ENCODE measurements at regions of chr13 and their contacts with region 1.

Region 1: GRCh38 chr13:49792550-49793324 is at the start of gene KPNA3:
- DNase-seq: peak; percentile 92 to 98 (median 96)
- ATAC-seq: peak; percentile 91
- H3K4me3 ChIP-seq: peak within 1 kb of the TSS; percentile 83 to 99
- H3K4me3 Mint-ChIP-seq: peak within 1 kb of the TSS; percentile 95
- H3K27ac ChIP-seq: peak within 1 kb of the TSS; percentile 79 to 89
- H3K27ac Mint-ChIP-seq: peak within 1 kb of the TSS; percentile 96
- H3K4me1 ChIP-seq: peaks cover 21% of the 10 kb centered on the region
- H3K4me1 Mint-ChIP-seq: peaks cover 34% of the 10 kb centered on the region
- H3K27me3 ChIP-seq: peaks cover 0 to 7% of the 10 kb centered on the region in 2 experiments
- H3K27me3 Mint-ChIP-seq: peaks cover 9% of the 10 kb centered on the region
- CTCF ChIP-seq: no peak
- total RNA-seq, gene KPNA3: 22.3 to 23.5 TPM

Region 2: DNA sequence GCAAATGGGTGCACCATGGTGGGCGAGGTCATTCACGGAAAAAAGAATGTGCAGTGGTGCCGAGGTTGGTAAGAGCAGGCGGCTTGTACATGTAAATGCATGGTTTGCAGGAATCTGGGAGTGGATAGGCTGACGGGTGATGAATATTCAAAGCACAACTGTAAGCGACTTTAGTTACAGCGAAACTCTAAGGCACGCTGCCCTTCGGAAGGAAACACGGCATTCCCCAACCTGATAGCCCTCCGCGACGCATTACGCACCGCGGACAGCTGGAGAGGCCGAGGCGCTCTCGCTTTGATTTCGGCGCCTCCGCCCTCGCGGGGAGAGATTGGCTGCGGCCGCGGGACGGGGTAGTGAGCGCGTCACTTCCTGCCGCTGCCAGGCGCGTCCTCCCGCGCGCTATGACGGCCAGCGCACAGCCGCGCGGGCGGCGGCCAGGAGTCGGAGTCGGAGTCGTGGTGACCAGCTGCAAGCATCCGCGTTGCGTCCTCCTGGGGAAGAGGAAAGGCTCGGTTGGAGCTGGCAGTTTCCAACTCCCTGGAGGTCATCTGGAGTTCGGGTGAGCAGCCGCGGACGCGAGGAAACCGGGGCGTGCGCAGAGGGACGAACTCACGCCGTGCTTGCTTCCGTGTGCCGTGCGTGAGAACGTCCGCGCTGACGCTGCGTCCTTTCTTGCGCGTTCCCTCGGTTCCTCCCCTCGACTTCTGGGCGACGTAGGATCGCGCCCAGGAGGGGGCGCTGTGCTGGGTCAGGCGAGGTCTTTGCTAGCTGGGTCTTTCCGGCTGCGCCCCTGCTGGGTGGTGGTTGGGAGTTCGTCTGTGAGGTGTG is 1755.2 kb before region 1 on chr13 and contains the start of gene NUDT15:
- CTCF ChIA-PET with region 1: no interaction called
- POLR2A ChIA-PET with region 1: interaction called, 3 read pairs
- intact Hi-C with region 1: loop called (anchors 5 kb)
- DNase-seq: peak; percentile 88 to 99 (median 97)
- ATAC-seq: peak; percentile 90
- H3K4me3 ChIP-seq: peak within 1 kb of the TSS; percentile 81 to 96
- H3K4me3 Mint-ChIP-seq: peak within 1 kb of the TSS; percentile 97
- H3K27ac ChIP-seq: peak within 1 kb of the TSS; percentile 99
- H3K27ac Mint-ChIP-seq: peak within 1 kb of the TSS; percentile 98
- H3K4me1 ChIP-seq: peaks cover 20% of the 10 kb centered on the region
- H3K4me1 Mint-ChIP-seq: peaks cover 32% of the 10 kb centered on the region
- H3K27me3 ChIP-seq: no peaks in the 10 kb centered on the region
- H3K27me3 Mint-ChIP-seq: no peaks in the 10 kb centered on the region
- CTCF ChIP-seq: peak; percentile 99
- total RNA-seq, gene NUDT15: 23.8 to 24.9 TPM

Region 3: DNA sequence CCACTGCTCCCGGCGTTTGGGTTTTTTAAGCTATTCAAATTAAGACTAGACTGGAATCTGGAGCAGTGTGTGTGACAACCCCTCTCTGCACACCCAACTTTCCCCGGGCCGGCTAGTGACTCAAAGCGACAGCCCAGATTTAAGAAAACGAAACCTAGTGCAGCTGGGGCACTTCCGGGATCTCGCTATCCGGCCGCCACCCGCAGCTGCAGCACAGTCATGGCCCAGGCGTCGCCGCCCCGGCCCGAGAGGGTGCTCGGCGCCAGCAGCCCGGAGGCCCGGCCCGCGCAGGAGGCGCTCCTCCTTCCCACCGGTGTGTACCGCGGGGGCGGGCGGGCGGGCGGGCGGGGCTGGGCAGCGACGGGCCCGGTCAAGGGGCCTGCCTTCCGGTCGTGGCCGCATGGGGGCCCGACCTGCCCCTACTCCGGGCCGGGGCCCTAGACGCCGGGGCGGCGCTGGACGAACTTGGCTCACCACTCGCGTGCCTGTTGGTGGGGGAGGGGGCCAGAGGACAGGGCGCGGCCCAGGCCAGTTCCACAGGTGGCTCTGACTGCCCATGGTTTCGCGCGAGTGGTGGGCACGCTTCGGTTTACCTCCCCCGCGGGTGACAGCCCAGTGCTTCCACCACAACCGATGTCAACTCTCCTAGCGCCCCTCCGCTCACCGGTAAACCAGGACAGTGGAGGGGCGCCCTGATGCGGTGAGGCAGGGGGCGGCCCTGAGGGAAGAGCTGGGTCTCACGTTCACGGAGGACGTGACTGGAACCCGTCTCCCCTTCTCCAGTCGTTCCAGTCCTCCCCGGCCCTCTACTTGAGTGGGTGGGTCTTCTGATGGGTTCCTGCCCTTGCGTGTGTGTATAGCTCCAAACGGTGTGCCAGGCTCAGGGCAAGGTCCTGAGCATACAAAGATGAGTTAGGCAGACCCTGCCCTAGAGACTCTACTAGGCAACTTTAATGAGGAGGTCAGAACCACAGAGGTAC is 296.7 kb before region 1 on chr13 and contains the start of gene PHF11:
- CTCF ChIA-PET with region 1: no interaction called
- POLR2A ChIA-PET with region 1: interaction called, 13 read pairs
- intact Hi-C with region 1: loop called (anchors 2 to 5 kb)
- DNase-seq: peak; percentile 67 to 94 (median 87)
- ATAC-seq: peak; percentile 80
- H3K4me3 ChIP-seq: peak within 1 kb of the TSS; percentile 68 to 88
- H3K4me3 Mint-ChIP-seq: peak within 1 kb of the TSS; percentile 96
- H3K27ac ChIP-seq: peak within 1 kb of the TSS; percentile 90 to 96
- H3K27ac Mint-ChIP-seq: peak within 1 kb of the TSS; percentile 99
- H3K4me1 ChIP-seq: peaks cover 20% of the 10 kb centered on the region
- H3K4me1 Mint-ChIP-seq: peaks cover 47% of the 10 kb centered on the region
- H3K27me3 ChIP-seq: no peaks in the 10 kb centered on the region
- H3K27me3 Mint-ChIP-seq: no peaks in the 10 kb centered on the region
- CTCF ChIP-seq: no peak
- total RNA-seq, gene PHF11: 93.9 to 98.3 TPM

Region 4: GRCh38 chr13:49690992-49691886 is 101.5 kb before region 1 on chr13 and contains the start of gene EBPL:
- CTCF ChIA-PET with region 1: no interaction called
- POLR2A ChIA-PET with region 1: interaction called, 10 read pairs
- intact Hi-C with region 1: loop called (anchors 1 to 5 kb)
- DNase-seq: peak; percentile 65 to 91 (median 88)
- ATAC-seq: peak; percentile 96
- H3K4me3 ChIP-seq: peak within 1 kb of the TSS; percentile 89
- H3K4me3 Mint-ChIP-seq: peak within 1 kb of the TSS; percentile 91
- H3K27ac ChIP-seq: peak within 1 kb of the TSS; percentile 41 to 47
- H3K27ac Mint-ChIP-seq: peak within 1 kb of the TSS; percentile 62
- H3K4me1 ChIP-seq: peaks cover 15% of the 10 kb centered on the region
- H3K4me1 Mint-ChIP-seq: peaks cover 23% of the 10 kb centered on the region
- H3K27me3 ChIP-seq: no peaks in the 10 kb centered on the region
- H3K27me3 Mint-ChIP-seq: no peaks in the 10 kb centered on the region
- CTCF ChIP-seq: peak; percentile 15
- total RNA-seq, gene EBPL: 9.5 to 10.7 TPM

Region 5: DNA sequence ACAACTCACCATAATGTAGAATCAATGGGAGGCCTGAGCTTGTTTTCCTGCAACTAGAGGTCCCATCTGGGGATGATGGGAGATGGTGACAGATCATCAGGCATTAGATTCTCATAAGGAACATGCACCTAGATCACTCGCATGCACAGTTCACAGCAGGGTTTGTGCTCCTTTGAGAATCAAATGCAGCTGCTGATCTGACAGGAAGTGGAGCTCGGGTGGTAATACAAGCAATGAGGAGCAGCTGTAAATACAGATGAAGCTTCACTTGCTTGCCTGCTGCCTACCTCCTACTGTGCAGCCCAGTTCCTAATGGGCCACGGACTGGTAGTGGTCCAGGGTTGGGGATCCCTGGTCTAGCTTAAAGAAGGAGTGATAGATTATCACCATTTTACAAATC is 33.2 kb before region 1 on chr13:
- CTCF ChIA-PET with region 1: no interaction called
- POLR2A ChIA-PET with region 1: no interaction called
- intact Hi-C with region 1: no loop called
- DNase-seq: peak in 3 of 9 experiments; percentile 17 to 29 (median 21)
- ATAC-seq: no peak
- H3K4me3 ChIP-seq: no peak overlapping the region
- H3K4me3 Mint-ChIP-seq: no peak overlapping the region
- H3K27ac ChIP-seq: peak overlapping the region in 1 of 2 experiments; percentile 17
- H3K27ac Mint-ChIP-seq: peak overlapping the region; percentile 34
- H3K4me1 ChIP-seq: peaks cover 2% of the 10 kb centered on the region
- H3K4me1 Mint-ChIP-seq: peaks cover 46% of the 10 kb centered on the region
- H3K27me3 ChIP-seq: no peaks in the 10 kb centered on the region
- H3K27me3 Mint-ChIP-seq: no peaks in the 10 kb centered on the region
- CTCF ChIP-seq: no peak

Region 6: DNA sequence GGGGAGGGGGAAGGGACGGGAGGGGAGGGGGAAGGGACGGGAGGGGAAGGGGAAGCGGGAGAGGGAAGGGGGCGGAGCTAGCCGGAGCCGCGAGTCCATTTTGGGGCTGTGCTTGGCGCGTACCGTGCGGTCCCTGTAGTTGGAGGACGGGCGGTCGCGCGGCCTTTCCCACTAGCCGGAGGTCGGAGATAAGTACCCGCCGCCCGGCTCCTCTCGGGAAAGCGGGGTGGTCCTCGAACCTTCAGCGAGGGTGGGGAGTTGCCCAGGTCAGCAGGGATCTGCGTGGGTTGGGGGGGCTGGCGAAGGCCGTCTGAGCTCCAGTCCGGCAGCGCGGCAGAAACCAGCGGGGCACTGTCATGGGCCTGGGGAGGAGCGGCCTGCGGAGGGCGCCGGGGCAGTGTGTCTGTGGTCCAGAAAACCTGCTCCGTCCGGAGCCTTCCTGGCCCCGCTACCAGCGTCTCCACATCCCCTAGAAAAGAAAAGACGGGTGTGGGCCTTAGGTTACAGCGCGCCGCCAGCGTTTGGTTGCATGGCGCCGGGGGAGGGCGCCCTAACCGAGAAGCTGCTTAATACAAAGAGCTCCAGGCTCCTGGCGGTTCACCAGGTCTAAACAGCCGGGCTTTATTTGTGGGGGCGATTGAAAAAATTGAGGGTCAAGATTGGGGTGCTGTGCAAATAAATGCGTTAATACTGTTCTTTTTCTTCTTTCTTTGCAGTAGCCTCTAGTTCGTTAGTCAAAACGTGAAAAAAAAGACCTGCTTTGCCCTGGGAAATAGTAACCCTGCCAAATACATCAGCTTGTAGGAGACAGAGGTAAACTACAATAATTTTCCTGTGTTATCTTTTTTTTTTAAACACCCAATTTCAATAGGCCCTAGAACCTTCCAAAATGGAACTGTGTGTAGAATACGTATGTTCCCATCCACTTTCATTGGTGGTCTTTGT is 204.5 kb after region 1 on chr13 and contains the start of gene TRIM13:
- CTCF ChIA-PET with region 1: no interaction called
- POLR2A ChIA-PET with region 1: no interaction called
- intact Hi-C with region 1: loop called in 1 of 2 experiments (anchors 5 kb)
- DNase-seq: peak; percentile 72 to 90 (median 81)
- ATAC-seq: peak; percentile 80
- H3K4me3 ChIP-seq: peak within 1 kb of the TSS; percentile 87 to 99
- H3K4me3 Mint-ChIP-seq: peak within 1 kb of the TSS; percentile 86
- H3K27ac ChIP-seq: peak within 1 kb of the TSS; percentile 84 to 85
- H3K27ac Mint-ChIP-seq: peak within 1 kb of the TSS; percentile 86
- H3K4me1 ChIP-seq: peaks cover 27% of the 10 kb centered on the region
- H3K4me1 Mint-ChIP-seq: peaks cover 49% of the 10 kb centered on the region
- H3K27me3 ChIP-seq: no peaks in the 10 kb centered on the region
- H3K27me3 Mint-ChIP-seq: no peaks in the 10 kb centered on the region
- CTCF ChIP-seq: peak; percentile 78
- total RNA-seq, gene TRIM13: 24.0 to 24.4 TPM

Region 7: GRCh38 chr13:50370303-50370950 is 577.7 kb after region 1 on chr13:
- CTCF ChIA-PET with region 1: no interaction called
- POLR2A ChIA-PET with region 1: no interaction called
- intact Hi-C with region 1: no loop called
- DNase-seq: no peak
- ATAC-seq: no peak
- H3K4me3 ChIP-seq: no peak overlapping the region
- H3K4me3 Mint-ChIP-seq: no peak overlapping the region
- H3K27ac ChIP-seq: no peak overlapping the region
- H3K27ac Mint-ChIP-seq: no peak overlapping the region
- H3K4me1 ChIP-seq: peaks cover 5% of the 10 kb centered on the region
- H3K4me1 Mint-ChIP-seq: peaks cover 25% of the 10 kb centered on the region
- H3K27me3 ChIP-seq: no peaks in the 10 kb centered on the region
- H3K27me3 Mint-ChIP-seq: peaks cover 8% of the 10 kb centered on the region
- CTCF ChIP-seq: no peak

Region 8: GRCh38 chr13:51583875-51584730 is 1791.4 kb after region 1 on chr13 and contains the start of gene WDFY2:
- CTCF ChIA-PET with region 1: no interaction called
- POLR2A ChIA-PET with region 1: no interaction called
- intact Hi-C with region 1: loop called in 1 of 2 experiments (anchors 2 kb)
- DNase-seq: peak; percentile 98 to 100 (median 99)
- ATAC-seq: peak; percentile 82
- H3K4me3 ChIP-seq: peak within 1 kb of the TSS; percentile 71 to 81
- H3K4me3 Mint-ChIP-seq: peak within 1 kb of the TSS; percentile 99
- H3K27ac ChIP-seq: peak within 1 kb of the TSS; percentile 83 to 89
- H3K27ac Mint-ChIP-seq: peak within 1 kb of the TSS; percentile 100
- H3K4me1 ChIP-seq: peaks cover 11% of the 10 kb centered on the region
- H3K4me1 Mint-ChIP-seq: peaks cover 35% of the 10 kb centered on the region
- H3K27me3 ChIP-seq: no peaks in the 10 kb centered on the region
- H3K27me3 Mint-ChIP-seq: no peaks in the 10 kb centered on the region
- CTCF ChIP-seq: no peak
- total RNA-seq, gene WDFY2: 17.2 to 18.6 TPM

Measured in CD8-positive, alpha-beta T cell (primary cell).